Natural killer cell (primary cell): ENCODE measurements at regions of chr5 and their contacts with region 1.

Region 1: GRCh38 chr5:134289509-134290113 is 63.7 kb upstream of the PPP2CA start:
- DNase-seq: peak in 1 of 2 donors; percentile 81
- ATAC-seq: peak; percentile 75 to 86 (median 85)
- H3K4me3 ChIP-seq: no peak overlapping the region
- H3K4me3 Mint-ChIP-seq: no peak overlapping the region
- H3K27ac ChIP-seq: no peak overlapping the region
- H3K27ac Mint-ChIP-seq: no peak overlapping the region
- H3K4me1 ChIP-seq: no peaks in the 10 kb centered on the region
- H3K4me1 Mint-ChIP-seq: no peaks in the 10 kb centered on the region
- H3K27me3 ChIP-seq: no peaks in the 10 kb centered on the region
- H3K27me3 Mint-ChIP-seq: peaks cover 12 to 22% of the 10 kb centered on the region in 2 donors
- CTCF ChIP-seq: peak; percentile 63

Region 2: GRCh38 chr5:134100283-134101091 is 189.1 kb before region 1 on chr5:
- intact Hi-C with region 1: no loop called
- DNase-seq: peak; percentile 69 to 94
- ATAC-seq: peak; percentile 85 to 92 (median 92)
- H3K4me3 ChIP-seq: no peak overlapping the region
- H3K4me3 Mint-ChIP-seq: peak overlapping the region; percentile 41
- H3K27ac ChIP-seq: peak overlapping the region; percentile 89
- H3K27ac Mint-ChIP-seq: peak overlapping the region; percentile 82 to 87
- H3K4me1 ChIP-seq: peaks cover 71% of the 10 kb centered on the region
- H3K4me1 Mint-ChIP-seq: peaks cover 18 to 40% of the 10 kb centered on the region in 2 donors
- H3K27me3 ChIP-seq: no peaks in the 10 kb centered on the region
- H3K27me3 Mint-ChIP-seq: no peaks in the 10 kb centered on the region
- CTCF ChIP-seq: no peak

Region 3: DNA sequence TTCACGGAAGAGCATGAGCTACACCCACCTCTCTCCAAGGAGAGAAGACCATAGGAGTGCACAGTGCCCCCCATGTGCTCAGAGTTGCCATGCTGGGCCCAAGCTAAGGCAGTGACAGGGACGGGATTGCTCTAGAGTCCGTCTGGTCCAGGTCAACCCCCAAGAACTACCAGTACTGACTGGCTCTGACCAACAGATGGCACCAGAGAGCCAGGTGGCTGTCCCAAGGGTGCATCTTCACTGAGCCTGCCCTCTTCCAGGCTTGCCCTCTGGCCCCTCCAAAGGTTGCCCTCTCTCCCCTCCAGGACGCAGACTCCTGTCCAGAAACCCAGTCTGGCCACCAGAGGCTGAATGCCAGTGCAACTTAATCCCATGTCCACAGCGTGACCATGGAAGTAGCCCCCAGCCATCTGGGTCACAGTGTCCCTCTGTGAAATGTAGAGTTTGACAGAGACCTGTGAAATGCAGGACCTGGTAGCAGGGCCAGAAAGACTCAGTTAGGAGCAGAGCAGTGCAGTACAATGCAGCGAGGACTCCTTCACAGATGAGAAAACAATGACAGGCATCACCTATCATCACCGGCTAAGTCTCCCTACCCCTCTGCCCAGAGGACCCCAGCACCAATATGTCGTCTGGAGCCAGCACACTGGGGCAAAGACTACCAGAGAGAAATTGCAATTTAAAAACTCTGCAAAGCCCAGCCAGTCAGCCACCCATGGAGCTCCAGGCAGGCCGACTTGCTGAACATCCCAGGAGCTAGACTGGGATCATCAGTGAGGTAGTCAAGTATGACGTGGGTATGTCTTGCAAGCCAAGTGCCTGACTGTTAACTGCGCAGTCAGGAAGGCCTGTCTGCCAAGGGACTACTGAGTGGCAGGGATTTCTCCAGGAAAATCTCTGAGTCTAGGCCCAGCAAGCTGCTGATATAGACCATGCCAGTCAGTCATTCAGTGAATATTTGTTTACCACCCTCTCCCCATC is 105.2 kb before region 1 on chr5:
- intact Hi-C with region 1: loop called (anchors 1 kb)
- DNase-seq: peak; percentile 70 to 90
- ATAC-seq: peak; percentile 94 to 100 (median 94)
- H3K4me3 ChIP-seq: no peak overlapping the region
- H3K4me3 Mint-ChIP-seq: no peak overlapping the region
- H3K27ac ChIP-seq: no peak overlapping the region
- H3K27ac Mint-ChIP-seq: no peak overlapping the region
- H3K4me1 ChIP-seq: no peaks in the 10 kb centered on the region
- H3K4me1 Mint-ChIP-seq: no peaks in the 10 kb centered on the region
- H3K27me3 ChIP-seq: no peaks in the 10 kb centered on the region
- H3K27me3 Mint-ChIP-seq: no peaks in the 10 kb centered on the region
- CTCF ChIP-seq: peak; percentile 95